Uterus (tissue), 4 donors: ENCODE measurements at regions of chr7 and their contacts with region 1.

Region 1: GRCh38 chr7:132318352-132319318 is 257.6 kb downstream of the PLXNA4 start:
- DNase-seq: peak; percentile 83
- H3K4me3 ChIP-seq: no peak overlapping the region
- H3K27ac ChIP-seq: no peak overlapping the region
- H3K4me1 ChIP-seq: no peaks in the 10 kb centered on the region
- H3K27me3 ChIP-seq: no peaks in the 10 kb centered on the region
- CTCF ChIP-seq: peak; percentile 84 to 92 (median 88)
- POLR2A ChIP-seq: no peak

Region 2: GRCh38 chr7:132500727-132501440 is 182.2 kb after region 1 on chr7:
- intact Hi-C with region 1: loop called (anchors 5 kb)
- DNase-seq: peak; percentile 74 to 85
- H3K4me3 ChIP-seq: no peak overlapping the region
- H3K27ac ChIP-seq: no peak overlapping the region
- H3K4me1 ChIP-seq: no peaks in the 10 kb centered on the region
- H3K27me3 ChIP-seq: no peaks in the 10 kb centered on the region
- CTCF ChIP-seq: peak; percentile 39 to 52 (median 46)
- POLR2A ChIP-seq: no peak

Region 3: DNA sequence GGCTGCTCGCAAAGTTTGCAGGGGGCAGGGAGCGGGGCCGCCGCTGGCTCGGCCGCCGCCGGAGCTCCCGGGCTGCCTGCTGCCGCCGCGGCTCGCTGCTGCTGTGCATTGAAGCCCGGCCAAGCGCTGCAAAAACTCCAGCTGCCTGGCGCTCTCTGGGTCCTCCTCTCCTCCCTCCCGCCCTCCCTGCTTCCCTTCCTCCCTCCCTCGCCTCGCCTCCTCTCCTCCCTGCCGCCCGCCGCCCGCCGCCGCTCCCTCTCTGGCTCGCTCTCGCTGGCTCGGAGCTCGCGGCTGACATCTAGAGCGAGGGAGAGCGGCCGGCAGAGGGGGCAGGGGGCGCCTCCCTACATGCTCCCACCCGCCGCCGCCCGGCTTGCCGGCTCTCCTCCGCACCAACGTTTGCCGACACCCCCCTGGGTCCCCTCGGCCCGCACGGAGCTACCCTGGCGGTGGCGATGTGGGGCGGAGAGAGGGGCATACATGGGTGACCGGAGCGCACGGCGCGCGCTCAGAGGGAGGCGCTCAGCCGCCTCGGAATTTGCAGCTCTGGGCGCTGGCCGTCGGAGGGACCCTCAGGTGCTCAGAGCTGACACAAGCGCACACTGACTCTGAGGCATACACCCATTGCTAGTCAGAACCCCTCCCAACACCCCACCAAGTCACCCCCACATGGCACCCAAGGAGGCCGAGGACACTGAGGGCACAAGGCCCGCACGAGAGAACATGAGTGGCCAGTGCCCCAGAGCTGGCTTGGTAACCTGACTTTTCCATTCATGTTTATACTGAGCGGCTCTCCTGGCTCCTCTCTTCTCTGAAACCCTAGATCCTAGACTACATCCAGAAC is 258.8 kb after region 1 on chr7:
- intact Hi-C with region 1: loop called (anchors 5 kb)
- DNase-seq: peak; percentile 76 to 82
- H3K4me3 ChIP-seq: peak overlapping the region in 1 of 2 donors; percentile 40
- H3K27ac ChIP-seq: peak overlapping the region in 1 of 2 donors; percentile 68
- H3K4me1 ChIP-seq: no peaks in the 10 kb centered on the region
- H3K27me3 ChIP-seq: no peaks in the 10 kb centered on the region
- CTCF ChIP-seq: peak in 1 of 4 experiments; percentile 26
- POLR2A ChIP-seq: no peak